Activated B cell treated with CpG ODN at 0.5 μM for 24 hours (primary cell): ENCODE measurements at regions of chr20 and their contacts with region 1.

Region 1: DNA sequence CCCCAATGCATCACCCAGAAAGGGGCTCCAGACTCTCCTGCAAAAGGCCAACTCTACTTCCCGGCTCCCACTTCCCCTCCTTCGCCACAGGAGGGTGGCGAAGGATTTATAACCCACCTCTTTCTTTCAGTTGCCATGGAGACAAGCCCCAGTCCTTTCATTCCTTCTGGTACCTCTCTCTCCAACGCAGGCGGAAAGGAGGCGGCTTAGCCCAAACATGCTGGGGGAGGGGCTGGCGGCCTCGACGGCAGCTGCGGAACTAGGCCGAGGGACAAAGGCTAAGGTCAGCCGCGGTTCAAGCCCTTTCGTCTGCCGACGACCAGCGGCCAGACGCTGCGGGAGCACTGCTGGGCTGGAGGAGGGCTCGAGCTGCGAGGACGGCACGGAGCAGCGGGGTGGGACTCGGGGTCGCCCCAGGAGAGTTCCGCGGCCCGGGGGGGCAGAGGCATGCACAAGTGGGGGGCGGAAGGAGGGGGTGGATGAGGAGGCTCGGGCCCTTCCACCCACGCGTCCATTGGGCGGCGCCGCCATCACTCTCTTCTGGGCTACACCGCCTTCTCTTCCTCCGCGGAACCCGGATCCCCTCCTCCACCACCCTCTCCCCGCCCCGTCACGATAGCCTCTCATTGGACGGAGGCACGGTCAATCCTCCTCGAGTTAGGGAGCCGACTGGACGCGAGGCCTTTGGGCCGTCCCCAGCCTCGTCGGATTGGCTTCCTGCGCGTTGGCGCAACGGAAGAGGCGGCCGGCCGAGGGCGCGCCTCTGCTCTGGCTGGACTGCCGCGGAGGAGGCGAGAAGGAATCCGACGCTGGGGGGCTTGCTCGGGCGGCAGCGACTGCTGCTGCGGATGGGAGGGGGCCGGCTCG is at the start of gene PANK2:
- DNase-seq: peak; percentile 92
- ATAC-seq: peak; percentile 96
- H3K4me3 Mint-ChIP-seq: peak within 1 kb of the TSS; percentile 97
- H3K27ac Mint-ChIP-seq: peak within 1 kb of the TSS; percentile 92
- H3K4me1 Mint-ChIP-seq: peaks cover 53% of the 10 kb centered on the region
- H3K27me3 Mint-ChIP-seq: no peaks in the 10 kb centered on the region
- CTCF ChIP-seq: no peak
- total RNA-seq, gene PANK2: 52.1 and 55.0 TPM in 2 replicates

Region 2: DNA sequence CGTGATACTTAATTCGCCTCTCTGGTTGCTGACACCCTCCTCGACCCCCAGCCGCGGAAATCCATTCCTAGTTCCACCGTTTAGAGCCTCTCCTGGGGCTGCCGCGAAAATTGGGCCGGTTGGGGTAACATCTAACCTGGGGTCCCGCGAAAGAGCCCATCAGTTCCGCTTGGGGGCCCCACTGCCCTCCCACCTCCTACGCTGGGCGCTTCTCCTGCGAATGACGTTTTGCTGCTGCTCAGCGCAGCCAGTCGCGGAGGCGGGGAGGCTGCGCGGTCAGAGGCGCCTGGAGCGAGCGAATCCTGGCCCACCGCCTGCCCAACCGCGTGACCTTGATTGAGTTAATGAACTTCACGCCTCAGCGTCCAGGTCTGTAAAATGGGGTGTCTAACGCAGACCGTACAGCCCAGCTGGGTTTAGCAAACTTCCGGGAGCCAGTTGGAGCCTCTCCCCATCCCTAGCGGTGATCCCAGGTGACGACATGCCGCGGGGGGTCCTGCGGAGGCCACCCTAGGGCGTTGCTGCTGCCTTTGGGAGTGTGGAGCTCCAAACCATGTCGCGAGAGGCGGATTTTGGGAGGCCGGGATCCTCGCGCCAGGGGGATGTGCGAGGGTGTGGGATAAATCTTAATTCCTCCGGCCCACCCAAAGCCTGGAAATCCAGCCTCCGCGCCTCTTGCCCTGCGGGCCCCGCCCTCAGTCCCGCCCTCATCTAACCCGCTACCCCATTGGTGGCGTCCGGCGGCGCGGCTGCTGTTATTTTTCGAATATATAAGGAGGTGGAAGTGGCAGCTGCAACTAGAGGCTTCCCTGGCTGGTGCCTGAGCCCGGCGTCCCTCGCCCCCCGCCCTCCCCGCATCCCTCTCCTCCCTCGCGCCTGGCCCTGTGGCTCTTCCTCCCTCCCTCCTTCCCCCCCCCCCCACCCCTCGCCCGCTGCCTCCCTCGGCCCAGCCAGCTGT is 93.1 kb before region 1 on chr20 and contains the start of gene CDC25B:
- CTCF ChIA-PET with region 1: no interaction called
- POLR2A ChIA-PET with region 1: no interaction called
- intact Hi-C with region 1: loop called (anchors 5 kb)
- DNase-seq: peak; percentile 75
- ATAC-seq: peak; percentile 84
- H3K4me3 Mint-ChIP-seq: peak within 1 kb of the TSS; percentile 92
- H3K27ac Mint-ChIP-seq: peak within 1 kb of the TSS; percentile 95
- H3K4me1 Mint-ChIP-seq: peaks cover 50% of the 10 kb centered on the region
- H3K27me3 Mint-ChIP-seq: no peaks in the 10 kb centered on the region
- CTCF ChIP-seq: no peak
- total RNA-seq, gene CDC25B: 21.6 and 24.3 TPM in 2 replicates

Region 3: DNA sequence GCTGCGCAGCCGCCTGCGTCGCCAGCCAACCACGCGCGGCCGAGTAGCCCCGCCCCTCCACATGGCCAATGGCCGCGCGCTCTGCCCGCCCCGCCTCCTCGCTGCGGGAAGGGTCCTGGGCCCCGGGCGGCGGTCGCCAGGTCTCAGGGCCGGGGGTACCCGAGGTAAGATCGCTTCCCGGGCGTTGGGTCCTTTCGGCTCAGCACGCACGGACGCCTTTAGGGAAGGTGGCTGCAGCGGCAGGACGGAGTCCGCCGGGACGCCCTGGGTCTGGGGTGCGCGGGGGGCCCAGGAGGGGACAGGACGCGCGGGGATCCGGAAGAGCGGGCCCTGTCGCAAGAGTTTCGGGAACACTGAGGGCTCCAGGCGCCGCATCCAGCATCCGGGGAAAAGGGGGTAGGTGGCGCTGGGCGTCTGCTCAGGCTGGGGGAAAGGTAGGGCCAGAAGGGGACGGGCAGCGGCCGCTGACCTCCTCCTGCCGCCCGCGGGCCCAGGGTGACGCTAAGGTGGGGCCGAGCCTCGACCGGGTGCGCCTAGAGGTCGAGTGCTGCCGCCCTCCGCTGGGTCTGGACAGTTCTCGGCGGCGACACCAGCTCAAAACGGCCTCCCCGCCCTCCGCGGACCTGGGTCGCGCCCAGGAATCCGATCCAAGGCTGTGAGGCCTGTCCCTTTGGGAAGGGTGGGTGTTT is 42.0 kb before region 1 on chr20 and contains the start of gene MAVS:
- CTCF ChIA-PET with region 1: no interaction called
- POLR2A ChIA-PET with region 1: interaction called, 4 read pairs
- intact Hi-C with region 1: loop called (anchors 1 kb)
- DNase-seq: peak; percentile 85
- ATAC-seq: peak; percentile 99
- H3K4me3 Mint-ChIP-seq: peak within 1 kb of the TSS; percentile 88
- H3K27ac Mint-ChIP-seq: peak within 1 kb of the TSS; percentile 80
- H3K4me1 Mint-ChIP-seq: peaks cover 26% of the 10 kb centered on the region
- H3K27me3 Mint-ChIP-seq: no peaks in the 10 kb centered on the region
- CTCF ChIP-seq: no peak
- total RNA-seq, gene MAVS: 33.5 and 39.7 TPM in 2 replicates

Region 4: DNA sequence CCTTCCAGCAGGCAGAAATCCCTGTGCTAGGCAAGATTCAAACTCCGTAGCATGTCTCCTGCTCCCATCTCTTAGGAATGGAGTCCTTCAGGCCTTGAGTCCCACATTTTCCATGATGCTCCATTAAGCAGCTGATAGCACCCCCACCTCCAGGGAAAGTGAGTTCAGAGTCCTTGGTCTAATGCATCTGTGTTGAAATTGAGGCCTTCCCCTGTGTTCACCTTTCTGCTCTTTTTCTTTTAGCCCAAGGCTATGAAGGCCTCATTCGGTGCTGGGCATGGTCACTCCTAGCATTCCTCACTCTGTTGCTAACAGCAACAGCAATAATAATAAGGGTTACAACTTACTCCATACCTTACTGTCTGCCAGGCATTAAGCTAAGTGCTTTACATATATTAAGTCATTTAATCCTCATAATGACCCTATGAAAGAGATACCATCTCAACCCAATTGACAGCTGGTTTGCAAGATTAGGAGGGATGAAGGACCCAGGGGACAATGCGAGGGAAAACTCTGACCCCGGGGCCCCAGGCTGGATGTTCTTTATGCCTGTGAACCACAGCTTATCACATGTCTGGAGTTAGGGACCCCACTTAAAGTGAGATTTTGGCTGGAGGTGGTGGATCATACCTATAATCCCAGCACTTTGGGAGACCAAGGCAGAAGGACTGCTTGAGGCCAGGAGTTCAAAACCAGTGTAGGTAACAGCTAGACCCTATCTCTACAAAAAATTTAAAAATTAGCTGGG is 17.1 kb before region 1 on chr20:
- CTCF ChIA-PET with region 1: no interaction called
- POLR2A ChIA-PET with region 1: no interaction called
- intact Hi-C with region 1: no loop called
- DNase-seq: no peak
- ATAC-seq: no peak
- H3K4me3 Mint-ChIP-seq: no peak overlapping the region
- H3K27ac Mint-ChIP-seq: no peak overlapping the region
- H3K4me1 Mint-ChIP-seq: peaks cover 13% of the 10 kb centered on the region
- H3K27me3 Mint-ChIP-seq: no peaks in the 10 kb centered on the region
- CTCF ChIP-seq: no peak

Region 5: DNA sequence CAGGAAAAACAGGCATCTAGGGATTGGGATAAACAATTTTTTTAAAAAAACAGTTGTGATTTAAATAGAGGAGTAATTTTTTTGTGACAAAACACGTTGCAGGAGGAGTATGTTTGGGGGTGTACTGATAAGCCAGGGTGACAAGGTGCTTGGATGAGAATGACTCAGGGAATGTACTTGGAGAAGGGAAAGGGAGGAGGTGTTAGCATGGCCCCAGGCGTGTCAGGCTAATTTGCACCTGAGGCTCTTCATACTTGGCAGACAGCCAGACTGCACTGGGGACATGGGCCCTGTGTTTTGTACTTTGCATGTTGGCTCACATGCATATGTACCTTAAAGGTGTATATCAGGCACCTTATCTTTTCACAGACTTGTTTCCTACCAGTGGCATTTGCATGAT is 23.1 kb after region 1 on chr20:
- CTCF ChIA-PET with region 1: no interaction called
- POLR2A ChIA-PET with region 1: interaction called, 13 read pairs
- intact Hi-C with region 1: loop called (anchors 2 kb)
- DNase-seq: no peak
- ATAC-seq: no peak
- H3K4me3 Mint-ChIP-seq: no peak overlapping the region
- H3K27ac Mint-ChIP-seq: no peak overlapping the region
- H3K4me1 Mint-ChIP-seq: peaks cover 30% of the 10 kb centered on the region
- H3K27me3 Mint-ChIP-seq: no peaks in the 10 kb centered on the region
- CTCF ChIP-seq: no peak

Region 6: GRCh38 chr20:4014031-4014474 is 125.2 kb after region 1 on chr20:
- CTCF ChIA-PET with region 1: interaction called, 3 read pairs
- POLR2A ChIA-PET with region 1: no interaction called
- intact Hi-C with region 1: loop called (anchors 1 kb)
- DNase-seq: no peak
- ATAC-seq: no peak
- H3K4me3 Mint-ChIP-seq: peak overlapping the region; percentile 83
- H3K27ac Mint-ChIP-seq: no peak overlapping the region
- H3K4me1 Mint-ChIP-seq: peaks cover 33% of the 10 kb centered on the region
- H3K27me3 Mint-ChIP-seq: peaks cover 2% of the 10 kb centered on the region
- CTCF ChIP-seq: no peak

Region 7: GRCh38 chr20:4038047-4038459 is 149.2 kb after region 1 on chr20:
- CTCF ChIA-PET with region 1: no interaction called
- POLR2A ChIA-PET with region 1: no interaction called
- intact Hi-C with region 1: loop called (anchors 2 kb)
- DNase-seq: peak; percentile 52
- ATAC-seq: peak; percentile 100
- H3K4me3 Mint-ChIP-seq: peak overlapping the region; percentile 82
- H3K27ac Mint-ChIP-seq: peak overlapping the region; percentile 96
- H3K4me1 Mint-ChIP-seq: peaks cover 16% of the 10 kb centered on the region
- H3K27me3 Mint-ChIP-seq: no peaks in the 10 kb centered on the region
- CTCF ChIP-seq: no peak

Region 8: GRCh38 chr20:4375881-4376280 is 487.0 kb after region 1 on chr20:
- CTCF ChIA-PET with region 1: no interaction called
- POLR2A ChIA-PET with region 1: no interaction called
- intact Hi-C with region 1: no loop called
- DNase-seq: no peak
- ATAC-seq: no peak
- H3K4me3 Mint-ChIP-seq: no peak overlapping the region
- H3K27ac Mint-ChIP-seq: no peak overlapping the region
- H3K4me1 Mint-ChIP-seq: no peaks in the 10 kb centered on the region
- H3K27me3 Mint-ChIP-seq: peaks cover 4% of the 10 kb centered on the region
- CTCF ChIP-seq: no peak